CD4-positive, alpha-beta T cell (primary cell): ENCODE measurements at regions of chr5 and their contacts with region 1.

Region 1: GRCh38 chr5:101585366-101585765 is 682.3 kb upstream of the ST8SIA4 start:
- DNase-seq: no peak
- ATAC-seq: no peak
- H3K4me3 ChIP-seq: no peak overlapping the region
- H3K4me3 Mint-ChIP-seq: no peak overlapping the region
- H3K27ac ChIP-seq: no peak overlapping the region
- H3K27ac Mint-ChIP-seq: no peak overlapping the region
- H3K4me1 ChIP-seq: no peaks in the 10 kb centered on the region
- H3K4me1 Mint-ChIP-seq: no peaks in the 10 kb centered on the region
- H3K27me3 ChIP-seq: no peaks in the 10 kb centered on the region
- H3K27me3 Mint-ChIP-seq: no peaks in the 10 kb centered on the region
- CTCF ChIP-seq: no peak

Region 2: GRCh38 chr5:100493996-100494395 is 1091.4 kb before region 1 on chr5:
- CTCF ChIA-PET with region 1: no interaction called
- POLR2A ChIA-PET with region 1: no interaction called
- intact Hi-C with region 1: loop called in 1 of 2 experiments (anchors 5 kb)
- DNase-seq: no peak
- ATAC-seq: no peak
- H3K4me3 ChIP-seq: no peak overlapping the region
- H3K4me3 Mint-ChIP-seq: no peak overlapping the region
- H3K27ac ChIP-seq: no peak overlapping the region
- H3K27ac Mint-ChIP-seq: no peak overlapping the region
- H3K4me1 ChIP-seq: no peaks in the 10 kb centered on the region
- H3K4me1 Mint-ChIP-seq: no peaks in the 10 kb centered on the region
- H3K27me3 ChIP-seq: no peaks in the 10 kb centered on the region
- H3K27me3 Mint-ChIP-seq: no peaks in the 10 kb centered on the region
- CTCF ChIP-seq: no peak